ENCODE measurements at regions of chr2 and their contacts with region 1.

Region 1: DNA sequence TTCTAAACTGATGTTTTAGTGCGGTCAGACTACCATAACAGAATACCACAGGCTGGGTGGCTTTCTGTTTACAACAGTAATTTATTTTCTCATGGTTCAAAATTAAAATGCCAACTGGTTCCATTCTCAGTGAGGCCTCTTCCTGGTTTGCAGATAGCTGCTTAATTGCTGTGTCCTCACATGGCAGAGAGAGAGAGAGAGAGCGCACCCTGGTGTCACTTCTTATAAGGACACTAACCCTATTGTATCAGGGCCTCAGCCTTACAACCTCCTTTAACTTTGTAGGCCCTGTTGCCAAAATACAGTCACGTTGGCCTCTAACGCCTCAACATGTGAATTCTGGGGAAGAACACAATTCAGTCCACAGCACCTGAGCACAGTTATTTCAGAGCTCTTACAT is 37.5 kb upstream of the ZNF385B start:
- DNase-seq: peak; percentile 27 to 77
- H3K4me3 ChIP-seq: no peak overlapping the region
- H3K27ac ChIP-seq: no peak overlapping the region
- H3K4me1 ChIP-seq: peaks cover 0 to 3% (median 0%) of the 10 kb centered on the region in 4 experiments; a peak in 1 of 7 replicates
- H3K27me3 ChIP-seq: no peaks in the 10 kb centered on the region
- CTCF ChIP-seq: peak; percentile 2 to 81 (median 69)
- EP300 ChIP-seq: peak in 1 of 2 experiments; percentile 28; a peak in 1 of 3 replicates
- POLR2A ChIP-seq: no peak
- RAD21 ChIP-seq: peak; percentile 79 to 84

Region 2: GRCh38 chr2:179837408-179837807 is 61.5 kb before region 1 on chr2:
- CTCF ChIA-PET with region 1: interaction called, 24 read pairs
- POLR2A ChIA-PET with region 1: no interaction called
- DNase-seq: no peak
- H3K4me3 ChIP-seq: no peak overlapping the region
- H3K27ac ChIP-seq: no peak overlapping the region
- H3K4me1 ChIP-seq: no peaks in the 10 kb centered on the region; a peak in 1 of 7 replicates
- H3K27me3 ChIP-seq: no peaks in the 10 kb centered on the region
- CTCF ChIP-seq: no peak
- EP300 ChIP-seq: no peak
- POLR2A ChIP-seq: no peak
- RAD21 ChIP-seq: no peak

Region 3: GRCh38 chr2:179856205-179856604 is 42.7 kb before region 1 on chr2:
- CTCF ChIA-PET with region 1: interaction called, 13 read pairs
- POLR2A ChIA-PET with region 1: interaction called, 3 read pairs
- DNase-seq: no peak
- H3K4me3 ChIP-seq: no peak overlapping the region
- H3K27ac ChIP-seq: no peak overlapping the region
- H3K4me1 ChIP-seq: peaks cover 0 to 2% (median 0%) of the 10 kb centered on the region in 4 experiments; a peak in 1 of 7 replicates
- H3K27me3 ChIP-seq: peaks cover 0 to 17% (median 5%) of the 10 kb centered on the region in 4 experiments; a peak in 4 of 7 replicates
- CTCF ChIP-seq: no peak
- EP300 ChIP-seq: no peak
- POLR2A ChIP-seq: no peak
- RAD21 ChIP-seq: no peak

Region 4: GRCh38 chr2:179877601-179878364 is 21.1 kb before region 1 on chr2:
- CTCF ChIA-PET with region 1: interaction called, 16 read pairs
- POLR2A ChIA-PET with region 1: no interaction called
- DNase-seq: no peak
- H3K4me3 ChIP-seq: no peak overlapping the region
- H3K27ac ChIP-seq: no peak overlapping the region
- H3K4me1 ChIP-seq: no peaks in the 10 kb centered on the region
- H3K27me3 ChIP-seq: peaks cover 0 to 1% (median 0%) of the 10 kb centered on the region in 4 experiments; a peak in 1 of 7 replicates
- CTCF ChIP-seq: no peak
- EP300 ChIP-seq: no peak
- POLR2A ChIP-seq: no peak
- RAD21 ChIP-seq: no peak

Region 5: GRCh38 chr2:179909845-179910734 is 11.2 kb after region 1 on chr2:
- CTCF ChIA-PET with region 1: interaction called, 12 read pairs
- POLR2A ChIA-PET with region 1: no interaction called
- DNase-seq: no peak
- H3K4me3 ChIP-seq: no peak overlapping the region
- H3K27ac ChIP-seq: no peak overlapping the region
- H3K4me1 ChIP-seq: peaks cover 0 to 7% (median 0%) of the 10 kb centered on the region in 4 experiments; a peak in 3 of 7 replicates
- H3K27me3 ChIP-seq: no peaks in the 10 kb centered on the region
- CTCF ChIP-seq: no peak
- EP300 ChIP-seq: no peak
- POLR2A ChIP-seq: no peak
- RAD21 ChIP-seq: no peak

Region 6: GRCh38 chr2:179936654-179937053 is 37.8 kb after region 1 on chr2:
- CTCF ChIA-PET with region 1: interaction called, 23 read pairs
- POLR2A ChIA-PET with region 1: no interaction called
- DNase-seq: peak; percentile 23 to 77
- H3K4me3 ChIP-seq: no peak overlapping the region
- H3K27ac ChIP-seq: no peak overlapping the region
- H3K4me1 ChIP-seq: peaks cover 0 to 2% (median 0%) of the 10 kb centered on the region in 4 experiments; a peak in 1 of 7 replicates
- H3K27me3 ChIP-seq: peaks cover 0 to 1% (median 0%) of the 10 kb centered on the region in 4 experiments; a peak in 1 of 7 replicates
- CTCF ChIP-seq: peak; percentile 42 to 62 (median 60)
- EP300 ChIP-seq: no peak
- POLR2A ChIP-seq: no peak
- RAD21 ChIP-seq: peak; percentile 60 to 67